ENCODE measurements at regions of chr15 and their contacts with region 1.

Region 1: DNA sequence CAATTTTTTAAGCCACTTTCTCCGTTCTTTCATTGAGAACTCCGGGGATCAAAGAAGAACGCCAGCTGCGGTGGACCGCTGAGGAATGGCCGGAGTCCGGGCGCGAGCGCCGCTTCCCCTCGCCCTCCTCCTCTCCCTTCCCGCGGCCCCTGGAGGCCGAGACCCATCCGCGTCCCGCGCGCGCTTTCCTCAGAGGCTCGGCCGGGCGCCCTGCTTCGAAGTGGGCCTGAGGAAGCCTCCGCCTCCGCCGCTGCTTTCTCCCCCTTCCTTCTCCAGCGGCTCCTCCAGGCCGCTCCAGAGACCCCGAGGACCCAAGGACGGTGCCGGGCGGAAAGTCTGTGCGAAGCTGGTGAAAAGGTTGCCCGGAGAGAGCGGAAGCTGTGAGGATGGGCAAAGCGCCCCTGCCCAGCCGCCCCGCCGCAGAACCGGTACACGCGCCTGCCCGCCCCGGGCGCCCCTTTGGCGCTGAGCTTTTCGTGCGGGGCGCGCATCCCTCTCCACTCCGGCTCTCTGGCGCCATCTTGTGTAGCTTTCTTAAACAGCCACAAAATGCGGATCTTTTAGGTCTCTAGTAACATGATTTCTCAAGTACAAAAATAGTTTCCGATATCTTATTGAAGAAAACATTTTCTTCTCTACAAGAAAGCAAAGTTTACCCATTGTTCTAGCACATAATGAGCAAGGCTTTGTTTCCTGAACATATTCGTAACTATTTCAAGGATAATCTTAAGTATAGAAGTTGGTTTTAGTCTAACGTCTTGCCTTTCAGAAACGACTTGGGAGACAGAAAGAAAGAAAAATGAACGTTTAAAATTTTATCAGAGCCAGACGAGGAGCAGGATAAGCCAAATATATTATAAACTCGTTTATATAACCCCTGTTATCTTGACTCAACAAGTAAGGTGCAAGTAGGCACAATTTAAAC is 59.2 kb upstream of the FAM174B start:
- DNase-seq: peak; percentile 87
- ATAC-seq: peak; percentile 85
- H3K4me3 ChIP-seq: peak overlapping the region; percentile 81
- H3K27ac ChIP-seq: no peak overlapping the region
- H3K4me1 ChIP-seq: peaks cover 3% of the 10 kb centered on the region; the same call in 1 of the 2 replicates
- H3K27me3 ChIP-seq: no peaks in the 10 kb centered on the region
- CTCF ChIP-seq: peak; percentile 94

Region 2: DNA sequence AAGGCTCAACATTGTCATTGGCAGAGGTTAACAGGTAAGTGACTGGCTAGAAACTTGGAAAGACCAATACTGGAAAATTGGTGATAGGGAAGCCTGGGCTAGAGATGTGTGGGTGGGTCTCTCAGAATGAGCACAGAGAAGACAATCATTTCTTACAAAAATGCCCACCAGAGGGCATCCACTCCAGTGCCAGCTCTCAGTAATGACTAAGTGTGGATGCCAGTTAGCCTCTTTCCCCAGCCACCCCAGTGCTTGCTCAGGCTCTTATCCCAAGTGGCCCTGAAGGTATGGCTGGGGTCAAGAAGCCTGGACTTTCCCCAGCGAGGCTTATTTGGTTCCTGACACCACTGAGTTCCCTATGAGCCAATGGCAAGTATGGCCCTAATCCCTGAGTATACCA is 437.0 kb before region 1 on chr15:
- CTCF ChIA-PET with region 1: no interaction called
- POLR2A ChIA-PET with region 1: no interaction called
- intact Hi-C with region 1: loop called (anchors 5 kb)
- DNase-seq: peak; percentile 35
- ATAC-seq: no peak
- H3K4me3 ChIP-seq: no peak overlapping the region
- H3K27ac ChIP-seq: no peak overlapping the region
- H3K4me1 ChIP-seq: no peaks in the 10 kb centered on the region
- H3K27me3 ChIP-seq: peaks cover 19% of the 10 kb centered on the region
- CTCF ChIP-seq: peak; percentile 43

Region 3: DNA sequence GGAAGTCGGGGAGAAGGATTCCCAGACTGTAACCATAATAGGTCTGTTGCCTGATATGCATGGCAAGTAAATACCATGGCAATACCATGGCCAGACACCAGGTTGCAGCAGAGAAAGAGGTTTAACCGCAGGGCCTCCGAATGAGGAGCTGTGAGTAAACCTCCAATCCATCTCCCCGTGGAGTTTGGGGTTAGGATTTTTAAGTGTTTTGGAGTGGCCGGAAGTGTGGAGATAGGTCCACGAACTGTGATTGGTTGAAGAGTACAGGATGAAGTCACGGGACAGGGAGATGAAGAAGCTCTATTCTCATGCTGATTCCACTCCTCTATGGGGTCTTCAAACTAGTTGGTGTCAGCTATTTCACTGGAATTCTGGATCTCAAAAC is 193.1 kb before region 1 on chr15:
- CTCF ChIA-PET with region 1: interaction called, 10 read pairs
- POLR2A ChIA-PET with region 1: no interaction called
- intact Hi-C with region 1: loop called (anchors 1 kb)
- DNase-seq: peak; percentile 86
- ATAC-seq: peak; percentile 78
- H3K4me3 ChIP-seq: no peak overlapping the region
- H3K27ac ChIP-seq: no peak overlapping the region
- H3K4me1 ChIP-seq: no peaks in the 10 kb centered on the region
- H3K27me3 ChIP-seq: peaks cover 3% of the 10 kb centered on the region; the same call in 1 of the 2 replicates
- CTCF ChIP-seq: peak; percentile 80

Region 4: DNA sequence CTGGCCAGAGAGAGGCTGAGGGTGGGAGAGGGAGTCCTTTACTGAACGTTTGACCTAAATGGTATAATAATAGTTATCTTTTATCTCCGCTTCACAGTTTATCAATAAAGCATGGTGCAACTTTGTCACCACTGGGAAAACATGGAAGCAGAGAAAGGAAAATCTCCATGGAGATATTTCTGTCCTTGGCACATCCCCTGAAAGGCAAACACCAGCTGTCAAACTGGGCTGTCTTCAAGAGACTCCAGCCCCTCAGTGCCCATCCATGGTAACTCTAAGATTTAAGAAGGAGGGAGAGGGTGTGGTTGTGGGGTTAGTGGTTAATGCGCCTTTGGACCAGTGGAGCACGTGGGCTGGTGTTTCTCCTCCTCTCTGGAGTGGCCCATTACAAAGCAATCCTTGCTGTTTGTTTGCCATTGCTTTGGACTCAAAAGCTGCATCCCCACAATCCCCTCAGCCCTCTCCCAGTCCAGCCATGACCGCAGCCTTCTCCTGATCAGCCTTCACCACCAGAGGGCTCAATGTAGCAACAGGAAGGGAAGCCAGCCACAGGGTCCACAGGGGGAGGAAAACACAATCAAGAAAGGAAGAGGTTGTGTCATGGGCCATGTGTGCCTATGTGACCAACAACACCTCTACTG is 20.9 kb before region 1 on chr15:
- CTCF ChIA-PET with region 1: no interaction called
- POLR2A ChIA-PET with region 1: no interaction called
- intact Hi-C with region 1: loop called (anchors 1 kb)
- DNase-seq: peak; percentile 49
- ATAC-seq: peak; percentile 54; the same call in 1 of the 2 replicates
- H3K4me3 ChIP-seq: no peak overlapping the region
- H3K27ac ChIP-seq: no peak overlapping the region
- H3K4me1 ChIP-seq: no peaks in the 10 kb centered on the region
- H3K27me3 ChIP-seq: peaks cover 21% of the 10 kb centered on the region
- CTCF ChIP-seq: peak; percentile 66

Measured in PC-3 (cell line).